Activated CD4-positive, alpha-beta memory T cell treated with anti-CD3 and anti-CD28 coated beads for 36 hours (primary cell): ENCODE measurements at regions of chr5 and their contacts with region 1.

Region 1: DNA sequence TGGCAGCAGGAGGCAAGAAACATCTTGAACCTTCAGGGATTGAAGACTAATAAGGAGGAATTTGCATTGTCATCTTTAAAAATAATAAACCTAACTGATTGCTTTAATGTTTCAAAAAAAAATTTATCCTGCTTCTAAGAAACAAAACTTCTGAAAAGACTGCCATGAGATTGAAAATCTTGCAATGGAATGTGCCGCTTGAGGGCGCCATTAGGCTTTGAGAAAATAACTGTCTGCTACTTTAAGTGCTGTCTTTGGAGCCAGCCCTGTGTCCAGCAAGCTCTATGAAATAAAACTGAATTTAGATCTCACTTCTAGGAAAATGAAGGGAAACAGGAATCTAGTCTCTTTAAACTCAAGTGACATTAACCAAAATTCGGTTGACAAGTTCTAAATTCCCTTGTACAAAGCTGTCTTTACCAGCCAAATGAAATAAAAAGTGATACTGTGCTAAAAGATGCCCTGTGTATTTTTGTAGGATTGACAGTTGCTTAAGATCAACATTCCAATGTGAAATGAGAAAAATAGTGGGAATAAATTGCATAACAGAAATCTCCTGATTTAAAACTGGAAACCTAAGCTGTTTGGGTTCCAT is 79.4 kb downstream of the ESM1 start:
- DNase-seq: peak; percentile 79
- H3K4me3 Mint-ChIP-seq: no peak overlapping the region
- H3K27ac Mint-ChIP-seq: no peak overlapping the region
- H3K4me1 Mint-ChIP-seq: peaks cover 16% of the 10 kb centered on the region
- H3K27me3 Mint-ChIP-seq: peaks cover 39% of the 10 kb centered on the region

Region 2: GRCh38 chr5:54867310-54867944 is 38.6 kb before region 1 on chr5:
- CTCF ChIA-PET with region 1: interaction called, 13 read pairs
- POLR2A ChIA-PET with region 1: interaction called, 3 read pairs
- intact Hi-C with region 1: loop called (anchors 1 kb)
- DNase-seq: no peak
- H3K4me3 Mint-ChIP-seq: no peak overlapping the region
- H3K27ac Mint-ChIP-seq: no peak overlapping the region
- H3K4me1 Mint-ChIP-seq: peaks cover 20% of the 10 kb centered on the region
- H3K27me3 Mint-ChIP-seq: peaks cover 40% of the 10 kb centered on the region

Region 3: DNA sequence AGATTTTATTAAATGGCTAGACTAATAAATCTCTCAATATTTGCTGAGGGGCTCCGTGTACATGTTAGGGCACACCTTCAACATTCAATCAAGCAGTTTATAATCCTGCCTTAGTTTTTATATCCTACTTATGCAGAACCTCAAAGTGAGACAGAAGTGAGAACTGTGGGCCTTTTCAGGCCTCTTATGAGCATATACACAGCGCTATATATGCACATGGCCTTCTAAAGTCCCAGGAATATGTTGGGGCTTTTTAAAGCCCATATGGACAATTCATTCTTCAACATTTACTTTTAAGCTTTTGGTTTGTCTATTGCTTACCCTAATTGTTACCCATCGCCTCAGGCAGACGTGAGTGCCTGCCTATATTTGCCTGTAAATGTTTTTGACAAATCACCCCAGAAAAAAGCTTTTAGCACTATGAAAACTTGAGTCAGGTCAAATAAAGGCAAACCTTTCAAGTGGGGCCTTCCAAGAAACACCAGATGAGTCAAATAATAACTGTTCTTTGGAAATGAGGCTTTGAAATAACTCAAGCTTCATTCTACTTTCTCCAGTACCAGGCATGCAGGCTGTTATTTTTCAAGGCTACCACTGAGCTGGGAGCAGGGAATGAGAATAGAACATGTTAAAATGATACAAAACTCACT is 21.2 kb after region 1 on chr5:
- CTCF ChIA-PET with region 1: interaction called, 14 read pairs
- POLR2A ChIA-PET with region 1: no interaction called
- intact Hi-C with region 1: loop called (anchors 1 kb)
- DNase-seq: no peak
- H3K4me3 Mint-ChIP-seq: no peak overlapping the region
- H3K27ac Mint-ChIP-seq: peak overlapping the region; percentile 14
- H3K4me1 Mint-ChIP-seq: peaks cover 8% of the 10 kb centered on the region
- H3K27me3 Mint-ChIP-seq: no peaks in the 10 kb centered on the region

Region 4: GRCh38 chr5:55037046-55037771 is 131.2 kb after region 1 on chr5:
- CTCF ChIA-PET with region 1: interaction called, 5 read pairs
- POLR2A ChIA-PET with region 1: no interaction called
- intact Hi-C with region 1: loop called (anchors 1 kb)
- DNase-seq: peak; percentile 89
- H3K4me3 Mint-ChIP-seq: peak overlapping the region; percentile 45
- H3K27ac Mint-ChIP-seq: peak overlapping the region; percentile 89
- H3K4me1 Mint-ChIP-seq: peaks cover 29% of the 10 kb centered on the region
- H3K27me3 Mint-ChIP-seq: no peaks in the 10 kb centered on the region

Region 5: DNA sequence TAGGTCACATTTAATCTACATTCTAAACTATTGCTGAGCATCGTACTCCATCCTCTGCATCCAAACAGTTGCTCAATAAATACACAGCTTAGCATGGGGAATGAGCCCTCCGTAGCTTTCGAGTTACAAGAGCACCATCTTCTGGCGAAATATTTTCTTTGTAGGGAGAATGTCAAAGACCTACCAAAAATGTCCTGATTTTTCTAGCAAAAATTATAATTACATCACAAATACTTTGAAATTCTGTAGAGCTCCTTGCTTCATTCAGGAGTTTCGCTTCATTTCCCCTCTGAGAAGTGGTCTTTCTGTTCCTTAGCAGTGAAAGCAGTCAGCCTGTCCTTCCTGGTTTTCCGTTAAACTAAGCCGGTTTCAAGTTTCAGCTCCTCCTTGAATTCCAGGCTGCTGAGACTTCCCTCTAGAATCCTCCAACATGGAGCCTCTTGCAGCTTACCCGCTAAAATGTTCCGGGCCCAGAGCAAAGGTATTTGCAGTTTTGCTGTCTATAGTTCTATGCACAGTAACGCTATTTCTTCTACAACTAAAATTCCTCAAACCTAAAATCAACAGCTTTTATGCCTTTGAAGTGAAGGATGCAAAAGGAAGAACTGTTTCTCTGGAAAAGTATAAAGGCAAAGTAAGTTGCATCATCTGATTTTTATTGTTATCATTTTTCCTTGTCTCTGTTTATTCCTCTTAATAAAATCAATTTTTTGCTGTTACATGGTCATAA is 253.9 kb after region 1 on chr5 and contains the start of gene GPX8:
- CTCF ChIA-PET with region 1: interaction called, 103 read pairs
- POLR2A ChIA-PET with region 1: no interaction called
- intact Hi-C with region 1: loop called (anchors 1 kb)
- DNase-seq: no peak
- H3K4me3 Mint-ChIP-seq: no peak within 1 kb of the TSS
- H3K27ac Mint-ChIP-seq: no peak within 1 kb of the TSS
- H3K4me1 Mint-ChIP-seq: no peaks in the 10 kb centered on the region
- H3K27me3 Mint-ChIP-seq: peaks cover 16% of the 10 kb centered on the region
- total RNA-seq, gene GPX8: not detected

Region 6: DNA sequence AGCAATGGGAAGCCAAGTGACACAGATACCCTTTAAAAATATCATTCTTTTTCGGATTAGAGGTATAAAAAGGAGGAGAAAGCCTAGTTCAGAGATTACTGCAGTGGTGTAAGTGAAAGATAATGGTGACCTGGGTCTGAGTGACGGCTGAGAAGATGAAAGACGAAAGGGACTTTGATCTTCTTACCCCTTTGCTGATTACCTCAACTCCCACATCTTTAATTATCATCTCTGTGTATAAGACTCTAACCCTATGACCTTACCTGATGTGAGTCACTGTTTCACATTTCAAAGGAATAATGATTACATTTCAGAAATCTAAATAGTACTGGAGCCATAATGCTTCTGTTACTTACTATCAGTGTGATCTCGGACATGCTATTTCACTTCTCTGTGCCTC is 348.8 kb after region 1 on chr5:
- CTCF ChIA-PET with region 1: no interaction called
- POLR2A ChIA-PET with region 1: no interaction called
- intact Hi-C with region 1: no loop called
- DNase-seq: no peak
- H3K4me3 Mint-ChIP-seq: no peak overlapping the region
- H3K27ac Mint-ChIP-seq: no peak overlapping the region
- H3K4me1 Mint-ChIP-seq: no peaks in the 10 kb centered on the region
- H3K27me3 Mint-ChIP-seq: no peaks in the 10 kb centered on the region